Vagina (tissue), 2 donors: ENCODE measurements at regions of chr2 and their contacts with region 1.

Region 1: GRCh38 chr2:160324161-160324800 is 124.2 kb upstream of the ITGB6 start:
- DNase-seq: no peak
- H3K4me3 ChIP-seq: no peak overlapping the region
- H3K27ac ChIP-seq: no peak overlapping the region
- H3K4me1 ChIP-seq: peaks cover 72% of the 10 kb centered on the region
- H3K27me3 ChIP-seq: no peaks in the 10 kb centered on the region
- CTCF ChIP-seq: peak in 2 of 3 experiments; percentile 53 to 65
- POLR2A ChIP-seq: no peak

Region 2: GRCh38 chr2:160970052-160970965 is 646.0 kb after region 1 on chr2:
- intact Hi-C with region 1: loop called (anchors 10 kb)
- DNase-seq: no peak
- H3K4me3 ChIP-seq: no peak overlapping the region
- H3K27ac ChIP-seq: peak overlapping the region; percentile 62
- H3K4me1 ChIP-seq: no peaks in the 10 kb centered on the region
- H3K27me3 ChIP-seq: no peaks in the 10 kb centered on the region
- CTCF ChIP-seq: peak; percentile 11 to 74 (median 63)
- POLR2A ChIP-seq: no peak